Activated CD4-positive, alpha-beta memory T cell treated with anti-CD3 and anti-CD28 coated beads for 36 hours (primary cell): ENCODE measurements at regions of chr11 and their contacts with region 1.

Region 1: GRCh38 chr11:95912902-95913560 is 10.9 kb downstream of the MTMR2 start:
- DNase-seq: no peak
- H3K4me3 Mint-ChIP-seq: no peak overlapping the region
- H3K27ac Mint-ChIP-seq: no peak overlapping the region
- H3K4me1 Mint-ChIP-seq: peaks cover 32% of the 10 kb centered on the region
- H3K27me3 Mint-ChIP-seq: no peaks in the 10 kb centered on the region

Region 2: GRCh38 chr11:95767498-95767897 is 145.5 kb before region 1 on chr11:
- CTCF ChIA-PET with region 1: no interaction called
- POLR2A ChIA-PET with region 1: no interaction called
- intact Hi-C with region 1: no loop called
- DNase-seq: no peak
- H3K4me3 Mint-ChIP-seq: no peak overlapping the region
- H3K27ac Mint-ChIP-seq: no peak overlapping the region
- H3K4me1 Mint-ChIP-seq: no peaks in the 10 kb centered on the region
- H3K27me3 Mint-ChIP-seq: no peaks in the 10 kb centered on the region

Region 3: GRCh38 chr11:95816037-95816436 is 97.0 kb before region 1 on chr11:
- CTCF ChIA-PET with region 1: no interaction called
- POLR2A ChIA-PET with region 1: no interaction called
- intact Hi-C with region 1: no loop called
- DNase-seq: no peak
- H3K4me3 Mint-ChIP-seq: no peak overlapping the region
- H3K27ac Mint-ChIP-seq: no peak overlapping the region
- H3K4me1 Mint-ChIP-seq: no peaks in the 10 kb centered on the region
- H3K27me3 Mint-ChIP-seq: no peaks in the 10 kb centered on the region

Region 4: GRCh38 chr11:95877291-95877690 is 35.7 kb before region 1 on chr11:
- CTCF ChIA-PET with region 1: no interaction called
- POLR2A ChIA-PET with region 1: no interaction called
- intact Hi-C with region 1: loop called (anchors 5 kb)
- DNase-seq: no peak
- H3K4me3 Mint-ChIP-seq: no peak overlapping the region
- H3K27ac Mint-ChIP-seq: peak overlapping the region; percentile 12
- H3K4me1 Mint-ChIP-seq: peaks cover 10% of the 10 kb centered on the region
- H3K27me3 Mint-ChIP-seq: no peaks in the 10 kb centered on the region